Sigmoid colon (tissue), 7 donors: ENCODE measurements at regions of chr19 and their contacts with region 1.

Region 1: DNA sequence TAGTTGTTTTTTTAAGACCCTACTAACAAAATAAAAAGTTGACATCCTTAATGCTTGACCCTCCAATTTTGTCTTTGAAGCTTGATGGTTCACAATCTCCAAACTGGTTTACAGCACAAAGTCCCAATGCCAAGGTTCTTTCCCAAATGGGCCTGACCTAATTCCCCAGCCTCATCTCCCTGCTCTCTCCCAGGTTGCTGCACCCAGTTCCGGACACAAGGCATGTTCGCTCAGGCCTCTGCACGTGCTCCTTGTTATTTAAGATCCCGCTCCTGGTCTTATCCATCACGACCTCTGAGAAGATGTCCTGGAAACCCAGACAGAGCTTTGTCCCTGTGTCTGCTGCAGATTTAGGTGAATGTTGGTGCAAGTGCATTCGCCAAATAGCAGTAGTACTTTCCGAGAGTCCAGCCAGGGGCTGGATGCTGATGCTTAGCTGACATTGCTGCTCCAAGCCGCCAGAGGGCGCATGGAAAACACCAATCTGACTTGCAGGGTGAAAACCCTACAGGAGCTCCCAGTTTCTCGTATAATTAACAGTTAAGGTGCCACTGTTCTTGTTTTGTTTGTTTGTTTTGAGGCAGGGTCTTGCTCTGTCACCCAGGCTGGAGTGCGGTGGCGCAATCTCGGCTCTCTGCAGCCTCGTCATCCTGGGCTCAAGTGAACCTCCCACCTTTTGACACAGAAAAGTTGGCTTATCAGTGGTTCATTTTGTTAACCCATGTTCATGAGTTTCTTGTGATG is 18.5 kb downstream of the LYPD3 start:
- DNase-seq: peak; percentile 88
- H3K4me3 ChIP-seq: no peak overlapping the region
- H3K27ac ChIP-seq: no peak overlapping the region
- H3K4me1 ChIP-seq: peaks cover 0 to 3% (median 0%) of the 10 kb centered on the region in 4 donors
- H3K27me3 ChIP-seq: no peaks in the 10 kb centered on the region
- CTCF ChIP-seq: peak; percentile 82 to 98 (median 92)
- EP300 ChIP-seq: no peak
- POLR2A ChIP-seq: no peak

Region 2: GRCh38 chr19:43329989-43330388 is 116.9 kb before region 1 on chr19:
- intact Hi-C with region 1: no loop called
- DNase-seq: no peak
- H3K4me3 ChIP-seq: no peak overlapping the region
- H3K27ac ChIP-seq: no peak overlapping the region
- H3K4me1 ChIP-seq: no peaks in the 10 kb centered on the region
- H3K27me3 ChIP-seq: no peaks in the 10 kb centered on the region
- CTCF ChIP-seq: no peak
- EP300 ChIP-seq: no peak
- POLR2A ChIP-seq: no peak

Region 3: GRCh38 chr19:43519436-43520088 is 72.6 kb after region 1 on chr19:
- intact Hi-C with region 1: loop called (anchors 1 kb)
- DNase-seq: peak; percentile 87
- H3K4me3 ChIP-seq: no peak overlapping the region
- H3K27ac ChIP-seq: no peak overlapping the region
- H3K4me1 ChIP-seq: peaks cover 0 to 7% (median 1%) of the 10 kb centered on the region in 4 donors
- H3K27me3 ChIP-seq: no peaks in the 10 kb centered on the region
- CTCF ChIP-seq: peak; percentile 79 to 88 (median 80)
- EP300 ChIP-seq: no peak
- POLR2A ChIP-seq: no peak

Region 4: GRCh38 chr19:43658494-43658893 is 211.6 kb after region 1 on chr19:
- intact Hi-C with region 1: loop called (anchors 5 kb)
- DNase-seq: no peak
- H3K4me3 ChIP-seq: no peak overlapping the region
- H3K27ac ChIP-seq: no peak overlapping the region
- H3K4me1 ChIP-seq: no peaks in the 10 kb centered on the region
- H3K27me3 ChIP-seq: no peaks in the 10 kb centered on the region
- CTCF ChIP-seq: no peak
- EP300 ChIP-seq: no peak
- POLR2A ChIP-seq: no peak